H1 (cell line): ENCODE measurements at regions of chr10 and their contacts with region 1.

Region 1: GRCh38 chr10:73879296-73880173 is 5.2 kb upstream of the CAMK2G start:
- DNase-seq: peak; percentile 50 to 87
- H3K4me3 ChIP-seq: no peak overlapping the region
- H3K27ac ChIP-seq: no peak overlapping the region
- H3K4me1 ChIP-seq: peaks cover 0 to 8% (median 4%) of the 10 kb centered on the region in 4 experiments; a peak in 5 of 7 replicates
- H3K27me3 ChIP-seq: peaks cover 0 to 3% (median 0%) of the 10 kb centered on the region in 4 experiments; a peak in 1 of 7 replicates
- CTCF ChIP-seq: peak; percentile 89 to 95 (median 90)
- EP300 ChIP-seq: no peak
- POLR2A ChIP-seq: no peak
- RAD21 ChIP-seq: peak; percentile 78 to 90

Region 2: GRCh38 chr10:73837072-73837471 is 42.5 kb before region 1 on chr10:
- CTCF ChIA-PET with region 1: interaction called, 279 read pairs
- POLR2A ChIA-PET with region 1: no interaction called
- DNase-seq: no peak
- H3K4me3 ChIP-seq: no peak overlapping the region
- H3K27ac ChIP-seq: no peak overlapping the region
- H3K4me1 ChIP-seq: no peaks in the 10 kb centered on the region
- H3K27me3 ChIP-seq: no peaks in the 10 kb centered on the region
- CTCF ChIP-seq: no peak
- EP300 ChIP-seq: no peak
- POLR2A ChIP-seq: no peak
- RAD21 ChIP-seq: no peak

Region 3: GRCh38 chr10:73894245-73894971 is 14.9 kb after region 1 on chr10:
- CTCF ChIA-PET with region 1: interaction called, 103 read pairs
- POLR2A ChIA-PET with region 1: interaction called, 3 read pairs
- DNase-seq: no peak
- H3K4me3 ChIP-seq: no peak overlapping the region
- H3K27ac ChIP-seq: no peak overlapping the region
- H3K4me1 ChIP-seq: no peaks in the 10 kb centered on the region
- H3K27me3 ChIP-seq: no peaks in the 10 kb centered on the region
- CTCF ChIP-seq: no peak
- EP300 ChIP-seq: no peak
- POLR2A ChIP-seq: no peak
- RAD21 ChIP-seq: no peak

Region 4: DNA sequence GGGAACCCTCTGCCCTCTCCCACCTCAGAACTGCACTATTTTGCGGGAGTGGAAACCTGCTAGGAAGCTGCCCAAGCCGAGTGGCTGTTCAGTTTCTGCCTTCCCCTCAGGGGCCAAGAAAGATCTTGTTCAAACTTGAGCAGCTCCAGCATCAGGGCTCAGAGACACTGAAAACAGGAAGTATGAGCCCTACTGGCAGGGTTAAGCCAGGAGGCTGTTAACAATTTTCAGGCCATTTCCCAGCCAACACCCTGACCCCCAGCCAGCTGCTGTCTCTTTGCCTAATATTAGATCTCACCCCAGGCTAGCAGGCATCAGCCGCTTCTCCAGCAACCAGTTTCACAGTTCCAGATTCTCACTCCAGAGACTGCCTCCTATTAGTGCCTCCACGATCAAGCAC is 40.6 kb after region 1 on chr10:
- CTCF ChIA-PET with region 1: interaction called, 32 read pairs
- POLR2A ChIA-PET with region 1: no interaction called
- DNase-seq: no peak
- H3K4me3 ChIP-seq: no peak overlapping the region
- H3K27ac ChIP-seq: peak overlapping the region; percentile 34; the same call in 1 of the 2 replicates
- H3K4me1 ChIP-seq: peaks cover 3 to 10% (median 4%) of the 10 kb centered on the region in 4 experiments
- H3K27me3 ChIP-seq: no peaks in the 10 kb centered on the region
- CTCF ChIP-seq: no peak
- EP300 ChIP-seq: no peak
- POLR2A ChIP-seq: no peak
- RAD21 ChIP-seq: no peak

Region 5: DNA sequence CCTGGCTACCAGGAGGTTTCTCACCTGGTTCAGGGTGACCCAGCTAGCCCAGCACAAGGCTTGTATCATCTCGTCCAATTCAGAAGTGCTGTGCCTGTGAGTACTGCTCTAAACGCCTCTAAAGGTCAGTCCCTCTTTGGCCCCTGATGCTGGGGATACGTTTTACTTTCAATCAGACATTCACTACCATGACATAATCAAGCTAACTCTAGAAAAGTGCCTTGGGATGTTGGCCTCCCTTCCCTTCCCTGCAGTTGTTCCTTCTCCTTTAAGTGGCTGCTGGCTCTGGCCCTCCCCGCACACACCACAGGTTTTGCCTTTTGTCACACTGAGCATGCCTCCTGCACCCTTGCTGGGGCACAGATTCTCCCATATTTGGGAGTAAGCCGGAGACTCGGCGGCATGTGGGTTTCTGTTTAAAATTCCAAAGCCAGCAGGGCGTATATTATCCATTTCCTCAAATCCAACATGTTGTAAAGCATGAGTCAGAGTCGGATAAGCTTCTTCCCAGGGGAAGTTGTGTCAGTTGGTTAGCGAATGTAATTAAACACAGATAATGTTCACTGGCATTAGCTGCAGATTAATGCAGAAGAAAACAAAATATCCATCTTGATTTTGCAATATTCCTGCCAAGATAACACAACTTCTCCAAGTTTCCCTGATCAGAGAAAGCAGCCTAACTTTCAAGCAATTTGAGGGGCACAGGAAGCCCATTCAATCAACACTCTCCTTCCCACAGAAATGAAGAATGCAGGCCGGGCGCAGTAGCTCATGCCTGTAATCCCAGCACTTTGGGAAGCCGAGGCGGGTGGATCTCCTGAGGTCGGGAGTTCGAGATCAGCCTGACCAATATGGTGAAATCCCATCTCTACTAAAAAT is 86.6 kb after region 1 on chr10:
- CTCF ChIA-PET with region 1: interaction called, 4 read pairs
- POLR2A ChIA-PET with region 1: interaction called, 10 read pairs
- DNase-seq: peak; percentile 80 to 96
- H3K4me3 ChIP-seq: peak overlapping the region in 1 of 4 experiments; percentile 38; a peak in 2 of 8 replicates
- H3K27ac ChIP-seq: peak overlapping the region; percentile 98
- H3K4me1 ChIP-seq: peaks cover 18 to 38% (median 31%) of the 10 kb centered on the region in 4 experiments
- H3K27me3 ChIP-seq: no peaks in the 10 kb centered on the region
- CTCF ChIP-seq: no peak
- EP300 ChIP-seq: peak in 1 of 2 experiments; percentile 97; a peak in 1 of 3 replicates
- POLR2A ChIP-seq: peak; percentile 71 to 96
- RAD21 ChIP-seq: peak in 1 of 2 experiments; percentile 11; a peak in 1 of 4 replicates

Region 6: GRCh38 chr10:74135452-74135851 is 255.9 kb after region 1 on chr10:
- CTCF ChIA-PET with region 1: no interaction called
- POLR2A ChIA-PET with region 1: no interaction called
- DNase-seq: no peak
- H3K4me3 ChIP-seq: no peak overlapping the region
- H3K27ac ChIP-seq: no peak overlapping the region
- H3K4me1 ChIP-seq: no peaks in the 10 kb centered on the region
- H3K27me3 ChIP-seq: no peaks in the 10 kb centered on the region
- CTCF ChIP-seq: no peak
- EP300 ChIP-seq: no peak
- POLR2A ChIP-seq: no peak
- RAD21 ChIP-seq: no peak